Activated CD4-positive, alpha-beta T cell treated with anti-CD3 and anti-CD28 coated beads, Interleukin-2, amount 10 ng/mL, durations not matched to agents 24 days and 14 days (primary cell): ENCODE measurements at regions of chr14 and their contacts with region 1.

Region 1: GRCh38 chr14:106586098-106586704 is 1059.8 kb downstream of the TMEM121 start:
- DNase-seq: peak; percentile 90
- H3K4me3 Mint-ChIP-seq: no peak overlapping the region
- H3K27ac Mint-ChIP-seq: no peak overlapping the region
- H3K4me1 Mint-ChIP-seq: no peaks in the 10 kb centered on the region
- H3K27me3 Mint-ChIP-seq: peaks cover 26% of the 10 kb centered on the region

Region 2: DNA sequence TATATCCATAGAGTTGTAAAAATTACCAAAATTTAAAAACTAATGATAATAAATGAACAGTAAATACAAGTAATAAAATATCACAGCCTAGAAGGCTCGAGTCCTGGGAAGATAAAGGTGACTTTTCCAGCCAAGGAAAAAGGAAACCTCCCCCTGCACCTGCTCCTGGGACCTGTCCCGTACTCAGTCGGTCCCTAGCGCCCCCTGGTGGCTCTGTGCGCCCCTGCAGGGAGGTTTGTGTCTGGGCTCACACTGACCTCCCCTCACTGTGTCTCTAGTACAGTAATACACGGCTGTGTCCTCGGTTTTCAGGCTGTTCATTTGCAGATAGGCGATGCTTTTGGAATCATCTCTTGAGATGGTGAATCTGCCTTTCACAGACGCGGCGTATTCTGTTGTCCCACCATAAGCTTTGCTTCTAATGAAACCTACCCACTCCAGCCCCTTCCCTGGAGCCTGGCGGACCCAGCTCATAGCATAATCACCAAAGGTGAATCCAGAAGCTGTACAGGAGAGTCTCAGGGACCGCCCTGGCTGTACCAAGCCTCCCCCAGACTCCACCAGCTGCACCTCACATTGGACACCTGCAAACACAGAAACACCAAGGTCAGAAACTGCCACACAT is 29.4 kb before region 1 on chr14:
- intact Hi-C with region 1: no loop called
- DNase-seq: peak; percentile 93
- H3K4me3 Mint-ChIP-seq: no peak overlapping the region
- H3K27ac Mint-ChIP-seq: no peak overlapping the region
- H3K4me1 Mint-ChIP-seq: no peaks in the 10 kb centered on the region
- H3K27me3 Mint-ChIP-seq: peaks cover 22% of the 10 kb centered on the region

Region 3: DNA sequence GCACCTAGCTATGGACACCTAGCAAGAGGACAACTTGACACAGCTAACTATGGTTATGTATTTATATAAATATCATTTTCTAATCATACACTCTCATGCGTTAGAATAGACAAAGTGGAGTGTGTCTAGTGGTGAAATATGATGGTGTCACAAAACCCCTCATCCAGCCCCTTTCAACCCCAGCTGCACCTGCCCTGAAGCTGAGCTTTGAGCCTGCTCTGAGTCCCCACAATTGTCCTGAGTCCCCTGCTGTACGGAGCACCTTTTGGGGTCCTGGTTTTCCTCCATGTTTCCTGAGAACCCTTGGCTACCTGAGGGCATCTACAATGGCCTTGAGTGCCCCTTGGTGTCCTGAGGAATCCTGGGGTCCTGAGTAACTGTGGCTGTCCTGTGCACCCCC is 13.0 kb after region 1 on chr14:
- intact Hi-C with region 1: no loop called
- DNase-seq: peak; percentile 36
- H3K4me3 Mint-ChIP-seq: no peak overlapping the region
- H3K27ac Mint-ChIP-seq: no peak overlapping the region
- H3K4me1 Mint-ChIP-seq: no peaks in the 10 kb centered on the region
- H3K27me3 Mint-ChIP-seq: peaks cover 70% of the 10 kb centered on the region

Region 4: GRCh38 chr14:106679776-106680175 is 93.6 kb after region 1 on chr14:
- intact Hi-C with region 1: loop called (anchors 5 kb)
- DNase-seq: peak; percentile 36
- H3K4me3 Mint-ChIP-seq: no peak overlapping the region
- H3K27ac Mint-ChIP-seq: no peak overlapping the region
- H3K4me1 Mint-ChIP-seq: peaks cover 2% of the 10 kb centered on the region
- H3K27me3 Mint-ChIP-seq: peaks cover 49% of the 10 kb centered on the region